Left lung (tissue), 14 donors: ENCODE measurements at regions of chr9 and their contacts with region 1.

Region 1: GRCh38 chr9:69056191-69056815 is 20.8 kb downstream of the FXN start:
- DNase-seq: no peak
- ATAC-seq: no peak
- H3K4me3 ChIP-seq: no peak overlapping the region
- H3K27ac ChIP-seq: no peak overlapping the region
- H3K4me1 ChIP-seq: peaks cover 2 to 14% of the 10 kb centered on the region in 2 donors
- H3K27me3 ChIP-seq: no peaks in the 10 kb centered on the region
- CTCF ChIP-seq: no peak

Region 2: GRCh38 chr9:69186841-69187611 is 130.7 kb after region 1 on chr9:
- intact Hi-C with region 1: loop called in 1 of 2 experiments (anchors 5 kb)
- DNase-seq: peak in 1 of 4 donors; percentile 64
- ATAC-seq: peak; percentile 69
- H3K4me3 ChIP-seq: no peak overlapping the region
- H3K27ac ChIP-seq: peak overlapping the region; percentile 65 to 80
- H3K4me1 ChIP-seq: peaks cover 28 to 48% of the 10 kb centered on the region in 2 donors
- H3K27me3 ChIP-seq: no peaks in the 10 kb centered on the region
- CTCF ChIP-seq: no peak